H1 (cell line): ENCODE measurements at regions of chr17 and their contacts with region 1.

Region 1: DNA sequence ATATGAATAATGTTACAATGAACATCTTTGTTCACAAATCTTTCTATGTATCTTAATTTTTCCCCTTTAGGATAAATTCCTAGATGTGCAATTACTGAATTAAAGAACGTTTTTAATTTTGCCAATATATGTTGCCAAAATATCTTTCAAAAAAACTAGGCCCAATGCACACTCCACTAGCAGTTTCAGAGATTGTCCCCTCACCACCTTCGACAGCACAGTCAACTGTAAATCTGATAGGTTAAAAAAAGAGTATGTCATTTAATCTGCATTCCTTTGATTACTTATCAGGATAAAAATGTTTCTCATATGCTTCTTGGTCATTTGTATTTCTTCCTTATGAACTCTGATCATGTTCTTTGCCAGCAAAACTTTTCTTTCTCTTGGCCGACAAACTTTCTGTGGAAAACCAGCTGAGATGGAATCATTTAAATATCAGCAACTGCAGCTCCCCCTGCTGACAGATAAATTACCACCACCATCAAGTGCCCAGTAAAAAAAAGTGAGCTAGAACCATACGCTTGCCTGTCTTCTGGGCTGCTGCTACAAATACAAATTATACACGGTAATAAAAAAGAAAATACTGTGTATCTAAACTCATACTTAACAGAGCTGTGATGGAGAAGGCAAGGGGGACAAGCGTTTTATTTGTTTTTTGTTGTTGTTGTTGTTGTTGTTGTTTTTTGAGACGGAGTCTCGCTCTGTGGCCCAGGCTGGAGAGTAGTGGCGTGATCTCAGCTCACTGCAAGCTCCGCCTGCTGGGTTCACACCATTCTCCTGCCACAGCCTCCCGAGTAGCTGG is 19.6 kb upstream of the KANSL1 start:
- DNase-seq: no peak
- H3K4me3 ChIP-seq: no peak overlapping the region
- H3K27ac ChIP-seq: no peak overlapping the region
- H3K4me1 ChIP-seq: no peaks in the 10 kb centered on the region
- H3K27me3 ChIP-seq: no peaks in the 10 kb centered on the region
- CTCF ChIP-seq: peak in 2 of 3 experiments; percentile 88 to 89; a peak in 3 of 4 replicates
- EP300 ChIP-seq: no peak
- POLR2A ChIP-seq: no peak
- RAD21 ChIP-seq: peak; percentile 75 to 79

Region 2: GRCh38 chr17:45677770-45678169 is 535.1 kb before region 1 on chr17:
- CTCF ChIA-PET with region 1: no interaction called
- POLR2A ChIA-PET with region 1: no interaction called
- DNase-seq: no peak
- H3K4me3 ChIP-seq: no peak overlapping the region
- H3K27ac ChIP-seq: no peak overlapping the region
- H3K4me1 ChIP-seq: peaks cover 0 to 7% (median 2%) of the 10 kb centered on the region in 4 experiments; a peak in 2 of 7 replicates
- H3K27me3 ChIP-seq: no peaks in the 10 kb centered on the region
- CTCF ChIP-seq: no peak
- EP300 ChIP-seq: no peak
- POLR2A ChIP-seq: no peak
- RAD21 ChIP-seq: no peak

Region 3: DNA sequence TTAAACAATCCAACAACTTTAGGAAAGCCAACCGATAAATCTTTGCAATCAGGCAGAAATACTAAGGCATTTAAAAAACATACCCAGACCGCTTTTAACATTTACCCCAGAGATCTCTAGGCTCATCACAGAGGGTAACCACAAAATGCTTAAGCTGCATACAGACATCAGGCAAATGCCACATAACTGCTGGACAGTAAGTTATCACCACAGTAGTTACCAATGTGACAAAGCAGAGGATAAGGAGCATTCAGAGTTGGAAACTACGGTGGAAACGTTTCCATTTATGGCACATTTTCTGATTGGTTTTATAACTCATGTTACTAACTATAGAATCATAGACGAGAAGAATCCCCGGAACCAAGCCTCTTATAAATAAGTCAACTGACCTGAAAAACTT is 97.1 kb before region 1 on chr17:
- CTCF ChIA-PET with region 1: no interaction called
- POLR2A ChIA-PET with region 1: no interaction called
- DNase-seq: no peak
- H3K4me3 ChIP-seq: no peak overlapping the region
- H3K27ac ChIP-seq: no peak overlapping the region
- H3K4me1 ChIP-seq: peaks cover 6 to 28% (median 18%) of the 10 kb centered on the region in 4 experiments; a peak in 6 of 7 replicates
- H3K27me3 ChIP-seq: no peaks in the 10 kb centered on the region
- CTCF ChIP-seq: no peak
- EP300 ChIP-seq: no peak
- POLR2A ChIP-seq: no peak
- RAD21 ChIP-seq: no peak

Region 4: DNA sequence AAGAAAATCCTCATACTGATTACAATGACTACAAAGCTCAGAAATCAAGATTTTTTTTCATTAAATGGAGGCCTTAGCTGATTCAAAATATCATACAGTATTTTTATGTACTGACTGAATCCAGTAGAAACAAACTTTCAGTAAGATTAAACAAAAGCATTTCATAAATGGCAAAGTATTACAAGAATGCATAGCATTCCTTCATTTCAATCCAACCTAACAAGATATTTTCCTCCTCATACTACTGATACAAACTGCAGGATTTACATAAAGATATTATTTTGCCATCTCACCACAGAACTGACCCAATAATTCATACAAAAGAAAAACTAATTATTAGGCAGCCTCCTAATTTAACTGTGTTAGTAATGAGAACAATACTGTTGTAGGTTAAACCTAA is 13.5 kb before region 1 on chr17:
- CTCF ChIA-PET with region 1: interaction called, 84 read pairs
- POLR2A ChIA-PET with region 1: interaction called, 7 read pairs
- DNase-seq: no peak
- H3K4me3 ChIP-seq: no peak overlapping the region
- H3K27ac ChIP-seq: no peak overlapping the region
- H3K4me1 ChIP-seq: peaks cover 0 to 3% (median 3%) of the 10 kb centered on the region in 4 experiments; a peak in 5 of 7 replicates
- H3K27me3 ChIP-seq: no peaks in the 10 kb centered on the region
- CTCF ChIP-seq: no peak
- EP300 ChIP-seq: no peak
- POLR2A ChIP-seq: no peak
- RAD21 ChIP-seq: no peak